Activated CD4-positive, alpha-beta memory T cell treated with anti-CD3 and anti-CD28 coated beads for 36 hours (primary cell): ENCODE measurements at regions of chr17 and their contacts with region 1.

Region 1: DNA sequence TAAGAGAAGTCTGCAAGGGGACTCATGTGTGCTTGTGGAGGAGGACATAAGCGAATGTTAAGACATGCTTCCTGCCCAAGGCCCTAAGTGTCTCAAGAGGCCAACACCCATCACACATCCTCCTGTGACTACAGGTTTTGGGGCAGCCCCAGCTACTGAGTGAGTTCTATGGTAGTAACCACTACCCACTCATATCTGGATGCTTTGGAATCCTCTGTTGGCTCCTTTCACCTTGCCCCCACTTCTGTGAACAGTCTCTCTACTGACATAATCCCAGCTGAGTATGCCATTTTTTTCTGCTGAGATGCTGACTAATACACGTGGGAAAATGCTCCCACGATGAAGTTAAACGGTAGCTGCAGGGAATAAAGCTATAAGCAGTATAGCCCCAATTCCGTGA is 153.5 kb downstream of the VPS53 start:
- DNase-seq: peak; percentile 72
- H3K4me3 Mint-ChIP-seq: no peak overlapping the region
- H3K27ac Mint-ChIP-seq: peak overlapping the region; percentile 71
- H3K4me1 Mint-ChIP-seq: peaks cover 22% of the 10 kb centered on the region
- H3K27me3 Mint-ChIP-seq: no peaks in the 10 kb centered on the region

Region 2: GRCh38 chr17:350706-351448 is 210.2 kb before region 1 on chr17:
- CTCF ChIA-PET with region 1: no interaction called
- POLR2A ChIA-PET with region 1: no interaction called
- intact Hi-C with region 1: no loop called
- DNase-seq: no peak
- H3K4me3 Mint-ChIP-seq: no peak overlapping the region
- H3K27ac Mint-ChIP-seq: no peak overlapping the region
- H3K4me1 Mint-ChIP-seq: no peaks in the 10 kb centered on the region
- H3K27me3 Mint-ChIP-seq: no peaks in the 10 kb centered on the region

Region 3: DNA sequence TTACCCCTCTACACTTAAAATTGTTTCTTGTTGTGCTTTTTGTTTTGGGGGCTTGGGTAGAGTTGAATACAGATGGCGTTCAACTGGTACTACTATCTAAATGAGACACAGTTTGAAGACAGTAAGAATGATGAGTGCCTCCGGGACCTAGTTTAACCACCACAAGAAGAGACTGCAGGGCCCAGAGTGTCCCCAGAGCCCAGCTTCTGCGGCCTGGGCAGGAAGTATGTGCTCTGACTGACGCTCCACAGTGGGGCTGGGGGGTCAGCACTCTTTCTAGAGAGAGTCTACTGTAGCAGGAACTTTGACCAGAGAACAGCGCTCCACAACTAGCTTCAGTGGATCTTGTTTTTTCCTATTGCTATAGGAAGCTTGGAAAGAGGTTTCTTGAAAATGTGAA is 20.5 kb before region 1 on chr17:
- CTCF ChIA-PET with region 1: no interaction called
- POLR2A ChIA-PET with region 1: interaction called, 4 read pairs
- intact Hi-C with region 1: loop called (anchors 1 kb)
- DNase-seq: no peak
- H3K4me3 Mint-ChIP-seq: no peak overlapping the region
- H3K27ac Mint-ChIP-seq: no peak overlapping the region
- H3K4me1 Mint-ChIP-seq: peaks cover 11% of the 10 kb centered on the region
- H3K27me3 Mint-ChIP-seq: no peaks in the 10 kb centered on the region